Mammary epithelial cell (primary cell): ENCODE measurements at regions of chrX and their contacts with region 1.

Region 1: GRCh38 chrX:53580742-53581504 is 105.6 kb downstream of the HUWE1 start:
- DNase-seq: no peak
- H3K4me3 ChIP-seq: no peak overlapping the region
- H3K27ac ChIP-seq: no peak overlapping the region
- H3K4me1 ChIP-seq: no peaks in the 10 kb centered on the region
- H3K27me3 ChIP-seq: no peaks in the 10 kb centered on the region
- CTCF ChIP-seq: no peak

Region 2: DNA sequence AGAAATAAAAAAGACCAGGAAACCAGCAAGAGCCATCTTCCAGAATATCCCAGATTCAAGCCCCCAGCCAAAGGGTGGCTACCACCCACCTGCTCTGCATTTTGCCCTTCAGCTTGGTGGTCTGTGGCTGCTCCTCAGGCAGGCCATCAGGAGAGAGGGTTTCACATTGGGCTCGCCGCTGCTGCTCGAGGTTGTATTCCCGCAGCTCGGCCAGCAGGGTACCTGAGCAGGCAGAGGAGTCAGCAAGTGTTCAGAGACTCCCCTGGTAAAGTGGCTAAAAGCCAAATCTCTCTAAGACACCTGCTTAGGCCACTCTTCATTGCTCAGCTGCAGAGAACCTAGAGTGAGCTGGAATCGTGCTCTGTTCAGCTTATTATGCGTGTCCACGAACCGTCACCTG is 36.0 kb before region 1 on chrX:
- CTCF ChIA-PET with region 1: no interaction called
- dilution Hi-C with region 1: loop called (anchors 5 kb)
- in situ Hi-C with region 1: no loop called
- intact Hi-C with region 1: no loop called
- DNase-seq: no peak
- H3K4me3 ChIP-seq: no peak overlapping the region
- H3K27ac ChIP-seq: no peak overlapping the region
- H3K4me1 ChIP-seq: peaks cover 6% of the 10 kb centered on the region
- H3K27me3 ChIP-seq: peaks cover 3% of the 10 kb centered on the region
- CTCF ChIP-seq: no peak